Activated CD4-positive, alpha-beta T cell treated with anti-CD3 and anti-CD28 coated beads, Interleukin-2, amount 10 ng/mL, durations not matched to agents 7 days and 5 days (primary cell): ENCODE measurements at regions of chr3 and their contacts with region 1.

Region 1: DNA sequence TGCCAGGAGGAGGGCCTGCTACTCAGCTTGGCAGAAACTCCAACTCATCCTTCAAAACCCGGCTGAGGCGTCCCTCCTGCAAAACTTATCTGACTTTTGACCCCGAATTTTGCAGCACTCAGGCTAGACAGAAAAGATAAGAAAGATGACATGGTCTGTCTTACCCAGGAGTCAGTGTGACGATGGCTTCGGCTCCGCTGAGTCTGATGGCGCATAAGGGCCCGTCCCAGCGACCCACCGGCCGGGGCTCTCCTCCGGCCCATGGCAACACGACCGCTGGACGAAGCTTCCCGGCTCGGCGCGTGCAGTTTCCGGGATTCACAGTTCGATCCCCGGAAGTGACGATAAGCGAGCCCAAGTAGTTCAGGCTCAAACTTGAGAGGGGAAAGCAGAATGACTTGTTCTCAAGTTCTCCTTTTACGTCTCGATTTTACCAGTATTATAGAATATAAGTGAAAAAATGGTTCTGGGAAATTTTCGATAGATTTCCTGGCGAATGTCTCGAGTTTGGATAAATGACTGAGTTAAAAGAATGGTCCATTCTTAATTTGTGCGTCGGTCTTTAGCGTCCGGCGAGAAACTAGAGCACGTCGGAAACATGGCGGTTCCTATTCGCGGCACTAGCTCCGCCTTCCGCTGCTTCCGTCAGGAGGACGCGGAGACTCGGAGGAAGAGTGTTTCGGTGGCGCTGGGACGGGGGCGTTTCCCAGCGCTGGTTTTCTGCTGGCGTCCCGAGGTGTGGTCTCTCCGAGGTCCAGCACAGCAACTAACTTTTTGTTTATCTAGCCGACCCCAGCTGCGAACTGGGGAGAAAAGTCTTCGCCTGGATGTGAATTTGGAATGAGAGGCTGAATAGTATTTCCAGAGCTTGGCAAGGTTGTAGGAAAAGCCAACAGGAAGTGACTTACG is at the start of gene LSG1:
- DNase-seq: peak; percentile 92
- H3K4me3 Mint-ChIP-seq: peak within 1 kb of the TSS; percentile 96
- H3K27ac Mint-ChIP-seq: peak within 1 kb of the TSS; percentile 99
- H3K4me1 Mint-ChIP-seq: peaks cover 44% of the 10 kb centered on the region
- H3K27me3 Mint-ChIP-seq: peaks cover 5% of the 10 kb centered on the region
- total RNA-seq, gene LSG1: 42.5 to 44.6 TPM

Region 2: DNA sequence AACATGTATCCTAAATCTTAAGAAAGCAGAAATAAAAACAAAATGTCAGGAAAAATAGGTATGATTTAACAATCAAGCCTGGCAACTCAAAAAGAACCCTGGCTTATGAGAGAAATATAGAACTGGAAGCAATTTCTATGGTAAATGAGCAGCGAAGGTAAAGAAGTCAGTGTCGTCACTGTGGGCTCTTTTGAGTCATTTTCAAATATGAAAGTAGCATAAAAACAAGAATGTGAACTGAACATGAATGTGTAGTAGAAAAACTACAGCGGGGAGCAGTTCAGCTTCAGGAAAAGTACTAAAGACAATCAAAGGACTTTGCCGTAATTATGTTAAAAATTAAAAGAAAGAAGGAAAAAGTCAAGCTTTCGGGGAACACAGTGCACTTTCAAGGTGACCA is 17.7 kb before region 1 on chr3:
- CTCF ChIA-PET with region 1: interaction called, 18 read pairs
- POLR2A ChIA-PET with region 1: no interaction called
- DNase-seq: no peak
- H3K4me3 Mint-ChIP-seq: peak overlapping the region; percentile 12
- H3K27ac Mint-ChIP-seq: peak overlapping the region; percentile 71
- H3K4me1 Mint-ChIP-seq: peaks cover 16% of the 10 kb centered on the region
- H3K27me3 Mint-ChIP-seq: no peaks in the 10 kb centered on the region

Region 3: GRCh38 chr3:194661374-194661773 is 10.8 kb before region 1 on chr3:
- CTCF ChIA-PET with region 1: interaction called, 18 read pairs
- POLR2A ChIA-PET with region 1: no interaction called
- DNase-seq: no peak
- H3K4me3 Mint-ChIP-seq: no peak overlapping the region
- H3K27ac Mint-ChIP-seq: no peak overlapping the region
- H3K4me1 Mint-ChIP-seq: peaks cover 19% of the 10 kb centered on the region
- H3K27me3 Mint-ChIP-seq: no peaks in the 10 kb centered on the region

Region 4: GRCh38 chr3:194682694-194683310 is 10.6 kb after region 1 on chr3:
- CTCF ChIA-PET with region 1: interaction called, 59 read pairs
- POLR2A ChIA-PET with region 1: no interaction called
- DNase-seq: peak; percentile 77
- H3K4me3 Mint-ChIP-seq: no peak overlapping the region
- H3K27ac Mint-ChIP-seq: no peak overlapping the region
- H3K4me1 Mint-ChIP-seq: peaks cover 40% of the 10 kb centered on the region
- H3K27me3 Mint-ChIP-seq: peaks cover 44% of the 10 kb centered on the region